ENCODE measurements at regions of chrX and their contacts with region 1.

Region 1: DNA sequence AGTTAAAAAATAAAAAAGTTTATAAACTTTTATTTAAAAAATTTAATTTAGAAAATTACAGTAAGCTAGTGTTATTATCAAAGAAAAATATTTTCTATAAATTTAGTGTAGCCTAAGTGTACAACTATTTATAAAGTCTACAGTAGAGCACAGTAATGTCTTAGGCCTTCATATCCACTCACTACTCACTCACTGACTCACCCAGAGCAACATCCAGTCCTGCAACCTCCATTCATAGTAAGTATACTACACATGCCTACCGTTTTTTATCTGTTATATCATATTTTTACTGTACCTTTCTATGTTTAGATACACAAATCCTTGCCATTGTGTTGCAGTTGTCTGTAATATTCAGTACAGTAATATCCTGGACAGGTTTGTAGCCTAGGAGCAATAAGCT is 129.0 kb upstream of the FAM47B start:
- DNase-seq: no peak
- H3K4me3 ChIP-seq: no peak overlapping the region
- CTCF ChIP-seq: no peak
- POLR2A ChIP-seq: no peak

Region 2: DNA sequence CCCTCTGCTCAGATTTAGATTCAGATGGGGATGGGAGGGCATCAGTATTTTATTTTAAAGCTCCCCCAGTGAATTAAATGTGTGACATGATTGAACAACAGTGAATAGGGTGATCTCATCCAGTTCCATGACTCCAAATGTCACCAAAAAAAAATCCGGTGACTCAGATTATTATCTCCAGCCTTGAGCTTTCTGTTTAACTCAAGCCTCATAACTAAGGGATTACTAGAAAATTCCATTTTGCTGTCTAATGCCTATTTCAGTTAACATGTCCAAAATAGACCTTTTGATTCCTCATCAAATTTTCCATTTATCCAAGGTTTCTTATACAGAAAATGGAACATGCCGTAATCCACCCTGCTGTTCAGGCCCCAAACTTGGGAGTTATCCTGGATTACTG is 34.7 kb before region 1 on chrX:
- intact Hi-C with region 1: loop called (anchors 1 kb)
- DNase-seq: no peak
- H3K4me3 ChIP-seq: no peak overlapping the region
- CTCF ChIP-seq: no peak
- POLR2A ChIP-seq: no peak

Region 3: DNA sequence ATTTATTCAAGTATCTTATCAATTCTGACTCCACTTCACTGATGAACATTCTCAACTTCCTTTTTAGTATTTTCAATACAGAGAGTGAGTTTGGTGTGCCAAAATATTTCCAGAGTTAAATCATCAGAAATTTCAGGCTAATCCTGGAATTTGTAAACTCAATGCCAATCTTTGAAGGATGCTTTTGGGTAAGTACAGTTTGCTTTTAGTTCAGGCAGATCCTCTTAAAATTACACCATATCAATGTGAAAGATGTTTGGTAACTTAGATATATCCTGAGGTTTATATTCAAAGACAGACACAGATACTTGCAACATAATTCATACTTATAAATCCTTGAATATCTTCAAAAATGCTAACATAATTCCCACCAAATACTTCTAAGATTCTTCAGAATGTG is 53.0 kb after region 1 on chrX:
- intact Hi-C with region 1: no loop called
- DNase-seq: no peak
- H3K4me3 ChIP-seq: no peak overlapping the region
- CTCF ChIP-seq: no peak
- POLR2A ChIP-seq: no peak

Region 4: GRCh38 chrX:36087366-36087765 is 1273.7 kb after region 1 on chrX:
- intact Hi-C with region 1: no loop called
- DNase-seq: no peak
- H3K4me3 ChIP-seq: no peak overlapping the region
- CTCF ChIP-seq: no peak
- POLR2A ChIP-seq: no peak